Vagina (tissue), 2 donors: ENCODE measurements at regions of chr12 and their contacts with region 1.

Region 1: GRCh38 chr12:7018350-7019042 is at the start of gene LPCAT3:
- DNase-seq: peak in 1 of 2 donors; percentile 97
- H3K4me3 ChIP-seq: peak within 1 kb of the TSS; percentile 90 to 96
- H3K27ac ChIP-seq: peak within 1 kb of the TSS; percentile 84
- H3K4me1 ChIP-seq: peaks cover 29% of the 10 kb centered on the region
- H3K27me3 ChIP-seq: no peaks in the 10 kb centered on the region
- CTCF ChIP-seq: peak; percentile 67 to 73 (median 70)
- POLR2A ChIP-seq: peak in 1 of 2 donors; percentile 53
- total RNA-seq, gene LPCAT3: 42.0 TPM

Region 2: DNA sequence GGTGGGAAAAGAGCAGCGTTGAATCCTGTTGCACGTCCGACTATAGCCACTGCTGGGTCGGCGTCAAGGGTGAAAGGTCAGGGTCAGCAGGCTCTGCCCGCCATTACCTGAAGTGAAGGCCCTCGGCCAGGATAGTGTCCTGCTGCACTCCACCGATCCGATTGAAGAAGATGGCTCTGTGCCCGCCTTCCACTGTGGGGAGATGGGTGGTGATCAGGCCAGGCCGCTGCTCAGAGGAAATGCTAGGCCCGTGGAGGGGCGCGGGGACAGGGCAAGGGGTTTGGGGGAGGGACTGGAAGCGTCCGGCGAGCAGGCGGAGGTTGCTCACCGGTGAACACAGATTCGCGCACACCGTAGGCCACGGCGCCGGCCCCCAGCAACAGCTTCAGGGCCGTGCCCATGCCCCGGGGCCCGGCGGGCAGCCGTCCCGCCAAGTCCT is 48.4 kb before region 1 on chr12:
- intact Hi-C with region 1: loop called (anchors 5 kb)
- DNase-seq: no peak
- H3K4me3 ChIP-seq: peak overlapping the region; percentile 57 to 91
- H3K27ac ChIP-seq: peak overlapping the region; percentile 84
- H3K4me1 ChIP-seq: peaks cover 29% of the 10 kb centered on the region
- H3K27me3 ChIP-seq: no peaks in the 10 kb centered on the region
- CTCF ChIP-seq: no peak
- POLR2A ChIP-seq: no peak